Caco-2 (cell line): ENCODE measurements at regions of chr19 and their contacts with region 1.

Region 1: GRCh38 chr19:33771384-33772101 is 25.1 kb upstream of the KCTD15 start:
- DNase-seq: peak; percentile 76 to 88
- H3K4me3 ChIP-seq: no peak overlapping the region
- H3K4me3 Mint-ChIP-seq: no peak overlapping the region
- H3K27ac Mint-ChIP-seq: no peak overlapping the region
- H3K4me1 ChIP-seq: no peaks in the 10 kb centered on the region
- H3K4me1 Mint-ChIP-seq: no peaks in the 10 kb centered on the region
- H3K27me3 ChIP-seq: peaks cover 2% of the 10 kb centered on the region; the same call in 1 of the 2 replicates
- H3K27me3 Mint-ChIP-seq: peaks cover 25% of the 10 kb centered on the region
- CTCF ChIP-seq: peak; percentile 83 to 95

Region 2: DNA sequence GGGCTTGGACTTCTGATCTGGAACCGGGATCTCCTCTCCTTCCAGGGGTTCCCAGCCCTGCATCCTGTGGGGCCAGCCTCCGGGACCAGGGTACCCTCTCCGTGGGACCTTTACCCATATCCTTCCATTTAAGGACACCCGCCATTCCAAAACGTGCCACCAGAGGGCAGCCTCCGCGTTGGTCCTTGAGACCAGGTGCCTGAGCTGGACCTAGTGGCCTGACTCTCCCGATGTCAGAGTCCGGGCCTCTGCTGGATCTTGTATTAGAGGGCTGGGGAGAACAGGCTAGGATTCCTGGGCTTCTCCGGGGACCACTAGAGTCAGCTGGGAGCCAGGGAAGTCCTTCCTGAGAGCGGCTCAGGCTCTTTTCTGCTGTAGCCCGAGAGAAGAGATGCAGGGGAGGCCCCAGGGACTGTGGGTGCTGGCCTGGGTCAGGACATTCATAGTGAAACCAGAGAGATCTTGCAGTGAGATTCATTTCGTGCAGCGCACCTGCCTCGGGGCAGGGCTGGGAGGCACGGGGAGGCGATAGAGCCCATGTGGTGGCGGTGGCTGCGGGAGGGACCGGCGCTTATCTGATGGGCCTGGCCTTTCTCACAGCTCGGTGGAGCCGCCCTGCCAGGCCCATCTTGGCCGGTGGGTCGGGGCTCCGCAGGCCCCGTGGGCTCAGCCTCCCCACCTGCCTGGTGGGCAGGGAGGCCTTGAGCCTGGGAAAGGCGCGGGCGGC is 536.1 kb before region 1 on chr19:
- CTCF ChIA-PET with region 1: no interaction called
- POLR2A ChIA-PET with region 1: no interaction called
- intact Hi-C with region 1: loop called (anchors 1 kb)
- DNase-seq: peak; percentile 89 to 92
- H3K4me3 ChIP-seq: no peak overlapping the region
- H3K4me3 Mint-ChIP-seq: no peak overlapping the region
- H3K27ac Mint-ChIP-seq: no peak overlapping the region
- H3K4me1 ChIP-seq: 0 out of 2 replicates have a peak, but pooled peaks cover 4% of the 10 kb centered on the region
- H3K4me1 Mint-ChIP-seq: no peaks in the 10 kb centered on the region
- H3K27me3 ChIP-seq: no peaks in the 10 kb centered on the region
- H3K27me3 Mint-ChIP-seq: peaks cover 2% of the 10 kb centered on the region
- CTCF ChIP-seq: peak; percentile 92 to 97

Region 3: GRCh38 chr19:33416307-33417215 is 355.0 kb before region 1 on chr19:
- CTCF ChIA-PET with region 1: interaction called, 8 read pairs
- POLR2A ChIA-PET with region 1: no interaction called
- intact Hi-C with region 1: loop called (anchors 1 kb)
- DNase-seq: peak; percentile 86
- H3K4me3 ChIP-seq: no peak overlapping the region
- H3K4me3 Mint-ChIP-seq: no peak overlapping the region
- H3K27ac Mint-ChIP-seq: no peak overlapping the region
- H3K4me1 ChIP-seq: peaks cover 4% of the 10 kb centered on the region; the same call in 1 of the 2 replicates
- H3K4me1 Mint-ChIP-seq: peaks cover 5% of the 10 kb centered on the region
- H3K27me3 ChIP-seq: no peaks in the 10 kb centered on the region
- H3K27me3 Mint-ChIP-seq: no peaks in the 10 kb centered on the region
- CTCF ChIP-seq: peak; percentile 77 to 82

Region 4: GRCh38 chr19:33430674-33431277 is 340.8 kb before region 1 on chr19:
- CTCF ChIA-PET with region 1: interaction called, 21 read pairs
- POLR2A ChIA-PET with region 1: no interaction called
- intact Hi-C with region 1: loop called (anchors 1 kb)
- DNase-seq: peak; percentile 72 to 82
- H3K4me3 ChIP-seq: no peak overlapping the region
- H3K4me3 Mint-ChIP-seq: no peak overlapping the region
- H3K27ac Mint-ChIP-seq: no peak overlapping the region
- H3K4me1 ChIP-seq: no peaks in the 10 kb centered on the region
- H3K4me1 Mint-ChIP-seq: no peaks in the 10 kb centered on the region
- H3K27me3 ChIP-seq: no peaks in the 10 kb centered on the region
- H3K27me3 Mint-ChIP-seq: no peaks in the 10 kb centered on the region
- CTCF ChIP-seq: peak; percentile 80 to 96

Region 5: DNA sequence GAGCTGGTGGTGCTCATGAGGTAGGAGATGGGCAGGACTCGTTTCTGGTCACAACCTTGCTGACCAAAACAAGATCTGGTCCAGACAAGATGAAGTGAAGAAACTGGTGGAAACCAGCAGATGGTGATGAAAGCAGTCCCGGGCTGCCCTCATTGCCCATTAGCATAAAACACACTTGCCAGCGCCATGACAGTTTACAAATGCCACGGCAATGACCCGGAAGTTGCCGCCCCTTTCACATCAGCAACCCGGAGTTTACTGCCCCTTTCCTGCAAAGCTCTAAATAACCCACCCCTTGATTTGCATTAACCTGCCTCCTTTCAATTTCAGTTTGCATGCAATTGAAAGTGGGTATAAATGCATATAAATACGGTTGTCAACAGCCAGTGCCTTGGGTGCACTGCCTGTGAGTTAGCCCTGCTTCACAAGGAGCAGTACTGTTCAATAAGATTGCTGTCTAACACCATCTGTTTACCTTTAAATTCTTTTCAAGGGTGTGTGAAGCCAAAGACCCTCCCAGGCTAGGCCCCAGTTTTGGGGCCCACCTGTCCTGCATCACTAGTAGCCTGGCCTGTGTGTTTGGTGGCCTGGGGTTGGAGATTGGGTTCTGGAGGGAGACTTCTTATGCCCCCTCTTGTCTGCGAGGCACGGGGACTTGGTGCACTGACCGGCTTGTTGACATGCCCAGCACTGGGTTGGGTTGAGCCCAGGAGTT is 111.0 kb before region 1 on chr19:
- CTCF ChIA-PET with region 1: interaction called, 10 read pairs
- POLR2A ChIA-PET with region 1: no interaction called
- intact Hi-C with region 1: no loop called
- DNase-seq: no peak
- H3K4me3 ChIP-seq: no peak overlapping the region
- H3K4me3 Mint-ChIP-seq: no peak overlapping the region
- H3K27ac Mint-ChIP-seq: no peak overlapping the region
- H3K4me1 ChIP-seq: no peaks in the 10 kb centered on the region
- H3K4me1 Mint-ChIP-seq: no peaks in the 10 kb centered on the region
- H3K27me3 ChIP-seq: no peaks in the 10 kb centered on the region
- H3K27me3 Mint-ChIP-seq: peaks cover 9% of the 10 kb centered on the region
- CTCF ChIP-seq: no peak

Region 6: GRCh38 chr19:33921165-33921564 is 149.6 kb after region 1 on chr19:
- CTCF ChIA-PET with region 1: no interaction called
- POLR2A ChIA-PET with region 1: no interaction called
- intact Hi-C with region 1: no loop called
- DNase-seq: no peak
- H3K4me3 ChIP-seq: no peak overlapping the region
- H3K4me3 Mint-ChIP-seq: no peak overlapping the region
- H3K27ac Mint-ChIP-seq: no peak overlapping the region
- H3K4me1 ChIP-seq: no peaks in the 10 kb centered on the region
- H3K4me1 Mint-ChIP-seq: no peaks in the 10 kb centered on the region
- H3K27me3 ChIP-seq: no peaks in the 10 kb centered on the region
- H3K27me3 Mint-ChIP-seq: peaks cover 13% of the 10 kb centered on the region
- CTCF ChIP-seq: no peak